Activated CD4-positive, alpha-beta T cell treated with anti-CD3 and anti-CD28 coated beads, Interleukin-2, amount 10 ng/mL, durations not matched to agents 24 days and 14 days (primary cell): ENCODE measurements at regions of chr1 and their contacts with region 1.

Region 1: GRCh38 chr1:12067900-12068821 is 5.1 kb downstream of the TNFRSF8 start:
- DNase-seq: peak; percentile 81
- H3K4me3 Mint-ChIP-seq: peak overlapping the region; percentile 71
- H3K27ac Mint-ChIP-seq: peak overlapping the region; percentile 94
- H3K4me1 Mint-ChIP-seq: peaks cover 55% of the 10 kb centered on the region
- H3K27me3 Mint-ChIP-seq: peaks cover 4% of the 10 kb centered on the region

Region 2: DNA sequence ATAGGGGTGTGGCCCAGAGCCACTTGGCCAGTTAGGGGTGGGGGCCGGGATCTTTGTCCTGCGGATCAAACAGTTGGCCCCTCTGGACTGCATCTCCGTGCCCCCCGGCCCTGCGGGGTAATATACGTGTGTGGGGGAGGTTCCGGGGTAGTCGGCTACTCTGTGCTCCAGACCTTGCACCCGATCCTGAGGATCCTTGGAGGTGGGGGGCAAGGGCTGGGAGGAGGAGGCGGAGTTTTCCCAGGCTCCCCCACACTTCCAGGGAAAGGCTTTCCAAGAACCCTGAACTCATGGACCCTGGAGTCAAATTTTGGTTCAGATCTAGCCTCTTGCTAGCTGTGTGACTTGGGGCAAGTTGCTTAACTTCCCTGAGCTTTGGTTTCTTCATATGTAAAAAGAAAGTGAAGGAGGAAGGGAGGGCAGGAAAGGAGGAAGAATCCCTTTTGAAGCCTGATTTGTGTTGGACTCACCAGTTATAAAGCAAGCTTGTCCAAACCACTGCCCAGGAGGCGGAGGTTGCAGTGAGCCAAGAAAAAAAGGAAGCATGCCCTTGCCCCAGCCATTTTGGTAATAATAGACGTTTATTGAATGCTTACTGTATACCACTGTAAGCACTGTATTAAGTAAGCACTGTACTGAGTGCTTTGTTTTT is 48.2 kb before region 1 on chr1:
- intact Hi-C with region 1: loop called (anchors 2 kb)
- DNase-seq: no peak
- H3K4me3 Mint-ChIP-seq: peak overlapping the region; percentile 91
- H3K27ac Mint-ChIP-seq: peak overlapping the region; percentile 72
- H3K4me1 Mint-ChIP-seq: peaks cover 16% of the 10 kb centered on the region
- H3K27me3 Mint-ChIP-seq: peaks cover 2% of the 10 kb centered on the region

Region 3: DNA sequence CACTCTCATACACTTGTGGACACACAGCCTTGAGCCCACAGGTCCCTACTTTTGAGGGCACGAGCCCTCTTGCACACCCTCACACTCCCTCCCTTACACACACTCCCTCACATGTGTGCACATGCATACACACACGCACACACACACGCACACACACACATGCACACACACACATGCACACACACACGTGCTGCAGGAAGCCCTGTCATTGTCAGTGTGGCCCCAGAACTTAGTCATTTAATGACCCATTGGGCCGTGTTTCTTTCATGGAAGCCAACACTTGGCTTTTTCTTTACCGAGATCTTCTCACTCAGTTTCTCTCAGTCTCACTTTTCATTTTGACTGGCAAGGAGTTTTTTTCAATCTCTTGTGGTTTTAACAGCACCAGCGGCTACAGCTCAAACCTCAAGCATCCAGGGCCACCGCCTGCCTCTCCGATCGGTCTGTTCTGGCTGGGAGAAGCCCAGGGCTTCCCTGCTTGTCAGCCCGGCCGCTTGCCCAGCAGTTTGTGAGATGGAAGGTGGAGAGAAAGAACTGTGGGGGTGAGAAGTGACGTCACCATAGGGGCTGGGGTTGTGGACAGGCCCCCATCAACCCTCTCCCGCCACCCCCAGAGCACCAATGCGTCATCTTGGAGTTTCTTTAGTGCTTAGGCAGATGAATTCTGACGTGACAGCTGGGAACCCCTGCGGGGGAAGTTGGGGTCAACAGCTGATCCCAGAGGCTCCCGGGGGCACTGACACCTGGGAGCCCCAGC is 20.9 kb before region 1 on chr1:
- intact Hi-C with region 1: loop called (anchors 1 kb)
- DNase-seq: peak; percentile 92
- H3K4me3 Mint-ChIP-seq: no peak overlapping the region
- H3K27ac Mint-ChIP-seq: no peak overlapping the region
- H3K4me1 Mint-ChIP-seq: peaks cover 24% of the 10 kb centered on the region
- H3K27me3 Mint-ChIP-seq: peaks cover 3% of the 10 kb centered on the region

Region 4: DNA sequence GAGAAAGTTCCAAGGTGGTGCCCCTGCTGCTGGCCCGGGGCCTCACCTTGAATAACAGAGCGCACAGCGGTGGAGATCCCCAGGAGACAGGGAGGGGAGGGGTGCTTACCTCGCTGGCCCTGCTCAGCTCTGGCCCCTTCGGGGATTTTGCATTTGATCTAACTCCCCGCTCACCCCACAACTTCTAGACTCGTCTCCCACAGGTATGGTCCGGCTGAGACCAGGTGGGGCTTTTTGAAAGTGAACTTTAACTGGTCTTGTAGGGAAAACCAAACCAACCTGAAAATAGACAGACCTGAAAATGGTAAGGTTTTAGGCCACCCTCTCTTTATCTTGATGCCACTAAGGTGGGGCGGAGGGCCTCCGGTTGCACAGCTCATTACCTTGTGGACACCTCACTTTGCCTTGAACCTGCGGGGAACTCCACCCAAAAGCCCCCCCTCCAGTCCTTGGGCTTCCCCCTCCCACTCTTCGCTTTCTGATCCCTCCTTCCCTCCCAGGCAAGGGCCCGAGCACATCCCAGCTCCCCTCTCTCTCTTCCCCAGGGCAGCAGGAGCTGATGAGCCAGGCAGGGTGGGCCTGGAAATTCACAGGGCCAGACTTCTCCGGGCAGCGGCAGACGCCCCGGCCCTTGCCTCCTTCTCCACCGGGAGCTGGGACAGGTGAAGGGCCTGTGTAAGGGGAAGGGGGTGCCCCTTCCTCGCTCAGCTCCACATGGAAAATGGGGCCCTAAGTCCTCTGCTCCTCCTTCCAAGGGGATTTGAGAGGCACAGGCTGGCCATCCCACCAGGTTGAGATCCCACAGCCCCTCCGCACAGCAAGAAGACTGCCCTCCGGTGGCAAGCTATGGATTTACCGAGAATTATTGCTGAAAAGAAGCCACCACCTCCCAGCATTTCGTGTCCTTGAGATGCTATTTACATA is 11.0 kb after region 1 on chr1:
- intact Hi-C with region 1: loop called (anchors 1 kb)
- DNase-seq: peak; percentile 81
- H3K4me3 Mint-ChIP-seq: no peak overlapping the region
- H3K27ac Mint-ChIP-seq: peak overlapping the region; percentile 61
- H3K4me1 Mint-ChIP-seq: peaks cover 39% of the 10 kb centered on the region
- H3K27me3 Mint-ChIP-seq: no peaks in the 10 kb centered on the region

Region 5: DNA sequence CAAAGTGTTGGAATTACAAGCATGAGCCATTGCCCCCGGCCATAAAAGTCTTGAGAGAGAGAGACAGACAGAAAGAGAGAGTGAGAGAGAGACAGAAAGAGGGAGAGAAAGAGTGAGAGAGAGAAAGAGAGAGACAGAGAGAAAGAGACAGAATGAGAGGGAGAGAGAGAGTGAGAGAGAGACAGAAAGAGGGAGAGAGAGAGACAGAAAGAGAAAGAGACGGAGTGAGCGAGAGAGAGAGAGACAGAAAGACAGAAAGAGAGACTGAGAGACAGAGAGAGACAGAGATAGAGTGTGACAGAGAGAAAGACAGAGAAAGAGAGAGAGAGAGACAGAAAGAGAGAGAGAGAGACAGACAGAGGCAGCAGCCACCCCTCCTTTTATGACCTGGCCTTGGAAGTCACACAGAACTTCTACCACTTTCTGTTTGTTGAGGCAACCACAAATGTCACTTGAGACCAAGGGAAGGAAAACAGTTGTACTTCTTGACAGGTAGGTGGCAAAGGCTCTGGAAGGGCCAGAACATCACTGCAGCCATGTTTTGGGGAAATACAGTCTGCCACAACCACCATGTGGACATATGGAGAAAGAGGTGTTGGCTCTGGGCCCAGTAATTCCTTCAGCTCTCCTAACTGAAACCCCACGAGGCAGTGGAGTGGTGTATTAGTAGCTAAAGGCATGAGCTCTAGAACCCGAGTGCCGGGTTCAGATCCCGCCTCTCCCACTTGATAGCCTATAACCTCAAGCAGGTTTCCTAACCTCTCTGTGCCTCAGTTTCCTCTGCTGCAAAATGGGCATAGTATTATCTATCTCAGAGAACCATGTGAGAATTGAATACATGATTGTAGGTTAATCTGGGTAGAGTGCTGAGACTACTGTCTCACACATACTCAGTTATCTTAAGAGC is 45.5 kb after region 1 on chr1:
- intact Hi-C with region 1: loop called (anchors 10 kb)
- DNase-seq: peak; percentile 75
- H3K4me3 Mint-ChIP-seq: peak overlapping the region; percentile 0
- H3K27ac Mint-ChIP-seq: peak overlapping the region; percentile 75
- H3K4me1 Mint-ChIP-seq: peaks cover 18% of the 10 kb centered on the region
- H3K27me3 Mint-ChIP-seq: no peaks in the 10 kb centered on the region

Region 6: GRCh38 chr1:12296623-12297022 is 228.5 kb after region 1 on chr1:
- intact Hi-C with region 1: loop called (anchors 1 kb)
- DNase-seq: no peak
- H3K4me3 Mint-ChIP-seq: peak overlapping the region; percentile 33
- H3K27ac Mint-ChIP-seq: peak overlapping the region; percentile 69
- H3K4me1 Mint-ChIP-seq: peaks cover 26% of the 10 kb centered on the region
- H3K27me3 Mint-ChIP-seq: no peaks in the 10 kb centered on the region